ENCODE measurements at regions of chr1 and their contacts with region 1.

Region 1: GRCh38 chr1:101438359-101438758 is 201.5 kb downstream of the S1PR1 start:
- DNase-seq: no peak
- ATAC-seq: peak; percentile 29
- H3K4me3 Mint-ChIP-seq: no peak overlapping the region
- H3K27ac Mint-ChIP-seq: no peak overlapping the region
- H3K4me1 Mint-ChIP-seq: peaks cover 42% of the 10 kb centered on the region
- H3K27me3 Mint-ChIP-seq: no peaks in the 10 kb centered on the region
- CTCF ChIP-seq: no peak

Region 2: DNA sequence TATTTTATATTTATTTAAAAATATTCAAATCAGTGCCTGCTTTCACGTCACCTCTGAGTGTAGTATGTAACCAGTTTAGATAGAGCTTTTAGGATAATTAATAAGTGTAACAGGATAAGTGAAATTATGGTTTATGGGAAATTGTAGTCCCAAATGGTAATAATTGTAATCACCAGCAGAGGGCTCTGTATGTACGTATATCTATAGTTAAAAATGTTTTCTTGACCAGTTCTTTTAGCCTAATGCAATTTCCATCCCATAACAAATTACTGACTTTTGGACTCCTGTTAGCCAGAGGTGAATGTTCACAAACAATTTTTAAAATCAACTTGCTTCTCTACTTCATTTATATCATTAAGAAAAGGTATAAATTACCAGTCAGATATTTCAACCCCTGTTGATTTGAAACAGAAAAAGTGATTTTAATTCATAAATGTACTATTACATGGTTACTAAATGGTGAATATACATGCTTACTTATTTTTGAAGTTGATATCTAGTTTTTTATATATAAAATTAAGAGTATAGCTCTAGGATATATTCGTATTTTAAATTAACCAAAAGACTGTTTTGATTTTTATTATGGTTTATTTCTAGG is 517.2 kb before region 1 on chr1:
- CTCF ChIA-PET with region 1: interaction called, 11 read pairs
- POLR2A ChIA-PET with region 1: no interaction called
- intact Hi-C with region 1: loop called (anchors 1 kb)
- DNase-seq: no peak
- ATAC-seq: no peak
- H3K4me3 Mint-ChIP-seq: no peak overlapping the region
- H3K27ac Mint-ChIP-seq: no peak overlapping the region
- H3K4me1 Mint-ChIP-seq: peaks cover 24% of the 10 kb centered on the region
- H3K27me3 Mint-ChIP-seq: no peaks in the 10 kb centered on the region
- CTCF ChIP-seq: peak; percentile 98

Region 3: DNA sequence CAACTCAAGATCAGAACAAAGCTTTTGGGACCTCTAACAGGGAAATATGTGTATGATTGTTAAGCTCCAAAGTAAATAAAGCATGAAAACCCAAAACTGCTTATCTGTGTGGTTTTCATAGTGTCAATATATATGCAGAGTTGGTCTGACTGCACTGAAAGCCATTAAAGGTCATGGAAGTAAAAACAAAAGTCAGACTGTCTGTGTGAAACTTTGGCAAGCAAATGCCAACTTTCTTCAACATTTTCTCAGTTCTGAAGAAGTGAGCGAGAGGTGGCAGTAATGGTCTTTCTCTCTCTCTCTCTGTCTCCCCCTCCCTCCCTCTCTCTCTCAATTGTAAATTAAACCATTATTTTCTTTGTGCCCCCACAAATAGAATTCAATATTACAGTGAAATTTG is 301.6 kb before region 1 on chr1:
- CTCF ChIA-PET with region 1: interaction called, 5 read pairs
- POLR2A ChIA-PET with region 1: interaction called, 3 read pairs
- intact Hi-C with region 1: loop called (anchors 1 kb)
- DNase-seq: no peak
- ATAC-seq: peak; percentile 80
- H3K4me3 Mint-ChIP-seq: peak overlapping the region; percentile 12
- H3K27ac Mint-ChIP-seq: peak overlapping the region; percentile 10
- H3K4me1 Mint-ChIP-seq: peaks cover 52% of the 10 kb centered on the region
- H3K27me3 Mint-ChIP-seq: no peaks in the 10 kb centered on the region
- CTCF ChIP-seq: no peak

Region 4: GRCh38 chr1:101309334-101310311 is 128.7 kb before region 1 on chr1:
- CTCF ChIA-PET with region 1: interaction called, 77 read pairs
- POLR2A ChIA-PET with region 1: interaction called, 28 read pairs
- intact Hi-C with region 1: loop called (anchors 1 kb)
- DNase-seq: peak; percentile 57
- ATAC-seq: peak; percentile 75
- H3K4me3 Mint-ChIP-seq: peak overlapping the region; percentile 82
- H3K27ac Mint-ChIP-seq: peak overlapping the region; percentile 94
- H3K4me1 Mint-ChIP-seq: peaks cover 78% of the 10 kb centered on the region
- H3K27me3 Mint-ChIP-seq: no peaks in the 10 kb centered on the region
- CTCF ChIP-seq: peak; percentile 77

Region 5: DNA sequence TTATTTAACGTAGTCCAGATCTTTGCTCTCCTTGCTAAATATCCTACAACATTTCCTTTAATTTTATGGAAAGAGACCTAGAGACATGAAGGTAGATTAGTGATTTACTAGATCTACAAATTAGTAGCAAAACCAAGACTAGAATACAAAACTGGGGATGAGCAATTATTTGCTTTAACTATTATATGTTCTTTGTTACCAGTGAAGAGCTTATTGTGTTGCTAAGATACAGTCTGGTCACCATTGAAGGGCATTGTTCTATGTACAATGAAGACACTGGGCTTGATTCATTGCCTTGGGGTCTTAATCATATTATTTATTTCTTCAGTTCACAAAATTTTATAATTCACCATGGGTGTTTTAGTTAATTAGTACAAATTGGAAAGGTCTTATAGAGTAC is 113.2 kb before region 1 on chr1:
- CTCF ChIA-PET with region 1: no interaction called
- POLR2A ChIA-PET with region 1: no interaction called
- intact Hi-C with region 1: no loop called
- DNase-seq: no peak
- ATAC-seq: no peak
- H3K4me3 Mint-ChIP-seq: no peak overlapping the region
- H3K27ac Mint-ChIP-seq: no peak overlapping the region
- H3K4me1 Mint-ChIP-seq: no peaks in the 10 kb centered on the region
- H3K27me3 Mint-ChIP-seq: peaks cover 2% of the 10 kb centered on the region
- CTCF ChIP-seq: no peak

Region 6: GRCh38 chr1:101388904-101389546 is 49.3 kb before region 1 on chr1:
- CTCF ChIA-PET with region 1: interaction called, 4 read pairs
- POLR2A ChIA-PET with region 1: no interaction called
- intact Hi-C with region 1: loop called (anchors 1 kb)
- DNase-seq: no peak
- ATAC-seq: peak; percentile 86
- H3K4me3 Mint-ChIP-seq: peak overlapping the region; percentile 32
- H3K27ac Mint-ChIP-seq: peak overlapping the region; percentile 87
- H3K4me1 Mint-ChIP-seq: peaks cover 51% of the 10 kb centered on the region
- H3K27me3 Mint-ChIP-seq: no peaks in the 10 kb centered on the region
- CTCF ChIP-seq: no peak

Region 7: GRCh38 chr1:101484689-101485338 is 46.5 kb after region 1 on chr1:
- CTCF ChIA-PET with region 1: no interaction called
- POLR2A ChIA-PET with region 1: no interaction called
- intact Hi-C with region 1: no loop called
- DNase-seq: no peak
- ATAC-seq: no peak
- H3K4me3 Mint-ChIP-seq: no peak overlapping the region
- H3K27ac Mint-ChIP-seq: no peak overlapping the region
- H3K4me1 Mint-ChIP-seq: no peaks in the 10 kb centered on the region
- H3K27me3 Mint-ChIP-seq: peaks cover 2% of the 10 kb centered on the region
- CTCF ChIP-seq: no peak

Region 8: GRCh38 chr1:101506541-101507164 is 68.3 kb after region 1 on chr1:
- CTCF ChIA-PET with region 1: no interaction called
- POLR2A ChIA-PET with region 1: no interaction called
- intact Hi-C with region 1: no loop called
- DNase-seq: no peak
- ATAC-seq: peak; percentile 57
- H3K4me3 Mint-ChIP-seq: no peak overlapping the region
- H3K27ac Mint-ChIP-seq: no peak overlapping the region
- H3K4me1 Mint-ChIP-seq: no peaks in the 10 kb centered on the region
- H3K27me3 Mint-ChIP-seq: peaks cover 5% of the 10 kb centered on the region
- CTCF ChIP-seq: peak; percentile 17

Region 9: GRCh38 chr1:101820071-101820470 is 381.7 kb after region 1 on chr1:
- CTCF ChIA-PET with region 1: no interaction called
- POLR2A ChIA-PET with region 1: no interaction called
- intact Hi-C with region 1: no loop called
- DNase-seq: no peak
- ATAC-seq: no peak
- H3K4me3 Mint-ChIP-seq: no peak overlapping the region
- H3K27ac Mint-ChIP-seq: no peak overlapping the region
- H3K4me1 Mint-ChIP-seq: no peaks in the 10 kb centered on the region
- H3K27me3 Mint-ChIP-seq: no peaks in the 10 kb centered on the region
- CTCF ChIP-seq: no peak

Measured in activated B cell treated with CpG ODN at 0.5 μM for 24 hours (primary cell).